Activated B cell treated with CpG ODN at 0.5 μM for 24 hours (primary cell): ENCODE measurements at regions of chr3 and their contacts with region 1.

Region 1: DNA sequence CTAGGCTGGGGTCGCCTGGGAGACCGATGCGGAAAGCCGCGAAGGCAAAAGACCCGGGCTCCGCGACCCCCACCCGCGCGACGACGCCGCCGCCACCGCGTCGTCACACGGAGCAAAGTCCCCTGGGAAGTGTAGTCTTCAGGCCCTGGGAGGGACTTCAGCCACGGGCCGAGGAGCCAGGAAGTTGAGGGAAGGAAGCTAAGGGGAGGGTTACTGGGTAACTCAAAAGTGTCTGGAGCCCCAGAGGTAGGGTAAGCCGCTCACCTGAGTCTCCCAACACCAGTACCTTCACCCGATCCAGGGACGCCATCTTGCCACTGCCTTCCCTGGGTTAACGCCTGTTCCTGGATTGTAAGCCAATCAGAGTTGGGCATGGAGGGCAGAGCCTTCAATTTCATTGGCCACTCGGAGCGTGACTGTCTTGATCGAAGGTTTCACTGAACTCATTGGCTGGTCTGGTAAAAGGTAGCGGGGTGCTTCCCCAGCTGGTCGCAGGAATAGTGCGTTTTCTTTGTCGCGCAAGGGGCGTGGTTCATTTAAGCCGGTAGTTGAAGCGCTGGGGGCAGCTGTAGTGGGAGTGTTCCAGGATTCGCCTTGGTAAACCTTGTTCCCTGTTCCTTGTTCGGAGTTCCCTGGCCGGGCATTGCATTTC is at the starts of genes GTF2E1 and RABL3:
- DNase-seq: peak; percentile 88
- ATAC-seq: peak; percentile 96
- H3K4me3 Mint-ChIP-seq: peak within 1 kb of the TSS; percentile 96
- H3K27ac Mint-ChIP-seq: peak within 1 kb of the TSS; percentile 97
- H3K4me1 Mint-ChIP-seq: peaks cover 36% of the 10 kb centered on the region
- H3K27me3 Mint-ChIP-seq: no peaks in the 10 kb centered on the region
- CTCF ChIP-seq: no peak
- total RNA-seq, gene GTF2E1: 22.1 and 22.9 TPM in 2 replicates
- total RNA-seq, gene RABL3: 29.7 and 29.9 TPM in 2 replicates

Region 2: DNA sequence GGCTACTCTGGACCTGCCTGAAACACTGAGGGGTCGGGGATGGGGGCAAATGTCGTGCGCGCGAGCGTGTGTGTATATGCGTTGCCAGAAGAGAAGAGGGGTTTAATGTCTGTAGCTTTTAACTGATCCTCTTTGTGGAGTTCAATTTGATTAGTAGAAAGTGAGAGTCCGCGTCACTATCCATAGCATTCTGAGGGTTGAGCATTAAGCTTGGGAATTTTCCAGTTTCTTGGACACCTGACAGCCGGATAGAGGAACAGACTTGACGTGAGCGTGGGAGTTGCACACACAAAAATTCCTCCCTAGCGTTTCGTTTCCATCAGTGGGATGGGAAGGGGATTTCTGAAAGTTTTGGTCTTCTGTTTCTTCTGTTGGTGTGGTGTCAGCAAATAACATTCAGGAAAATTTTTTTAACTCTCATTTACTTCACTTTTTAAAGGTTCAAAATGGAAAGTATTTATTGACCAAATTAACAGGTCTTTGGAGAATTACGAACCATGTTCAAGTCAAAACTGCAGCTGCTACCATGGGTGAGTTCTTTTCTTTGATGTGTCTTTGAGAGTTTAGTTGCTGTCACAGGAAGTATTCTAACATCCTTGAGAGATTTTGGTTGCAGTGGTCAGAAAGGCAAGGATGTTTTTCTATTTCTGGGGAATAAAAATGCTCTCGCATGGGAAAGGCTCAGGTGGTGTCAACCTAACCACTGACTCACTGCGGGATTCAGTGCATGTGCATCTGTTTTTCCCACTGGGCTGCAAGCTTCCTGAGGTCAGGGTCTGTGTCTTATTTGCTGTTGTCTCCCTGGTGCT is 1272.7 kb before region 1 on chr3:
- CTCF ChIA-PET with region 1: no interaction called
- POLR2A ChIA-PET with region 1: no interaction called
- intact Hi-C with region 1: loop called (anchors 2 kb)
- DNase-seq: no peak
- ATAC-seq: peak; percentile 45
- H3K4me3 Mint-ChIP-seq: peak overlapping the region; percentile 93
- H3K27ac Mint-ChIP-seq: peak overlapping the region; percentile 90
- H3K4me1 Mint-ChIP-seq: peaks cover 32% of the 10 kb centered on the region
- H3K27me3 Mint-ChIP-seq: no peaks in the 10 kb centered on the region
- CTCF ChIP-seq: no peak

Region 3: GRCh38 chr3:120417272-120417911 is 324.9 kb before region 1 on chr3:
- CTCF ChIA-PET with region 1: no interaction called
- POLR2A ChIA-PET with region 1: no interaction called
- intact Hi-C with region 1: loop called (anchors 5 kb)
- DNase-seq: peak; percentile 61
- ATAC-seq: peak; percentile 100
- H3K4me3 Mint-ChIP-seq: peak overlapping the region; percentile 83
- H3K27ac Mint-ChIP-seq: peak overlapping the region; percentile 37
- H3K4me1 Mint-ChIP-seq: peaks cover 16% of the 10 kb centered on the region
- H3K27me3 Mint-ChIP-seq: no peaks in the 10 kb centered on the region
- CTCF ChIP-seq: no peak

Region 4: GRCh38 chr3:120596116-120596852 is 146.0 kb before region 1 on chr3 and contains the start of gene NDUFB4:
- CTCF ChIA-PET with region 1: no interaction called
- POLR2A ChIA-PET with region 1: interaction called, 21 read pairs
- intact Hi-C with region 1: loop called (anchors 1 kb)
- DNase-seq: peak; percentile 82
- ATAC-seq: peak; percentile 96
- H3K4me3 Mint-ChIP-seq: peak within 1 kb of the TSS; percentile 96
- H3K27ac Mint-ChIP-seq: peak within 1 kb of the TSS; percentile 94
- H3K4me1 Mint-ChIP-seq: peaks cover 11% of the 10 kb centered on the region
- H3K27me3 Mint-ChIP-seq: peaks cover 2% of the 10 kb centered on the region
- CTCF ChIP-seq: no peak
- total RNA-seq, gene NDUFB4: 80.4 and 86.3 TPM in 2 replicates

Region 5: DNA sequence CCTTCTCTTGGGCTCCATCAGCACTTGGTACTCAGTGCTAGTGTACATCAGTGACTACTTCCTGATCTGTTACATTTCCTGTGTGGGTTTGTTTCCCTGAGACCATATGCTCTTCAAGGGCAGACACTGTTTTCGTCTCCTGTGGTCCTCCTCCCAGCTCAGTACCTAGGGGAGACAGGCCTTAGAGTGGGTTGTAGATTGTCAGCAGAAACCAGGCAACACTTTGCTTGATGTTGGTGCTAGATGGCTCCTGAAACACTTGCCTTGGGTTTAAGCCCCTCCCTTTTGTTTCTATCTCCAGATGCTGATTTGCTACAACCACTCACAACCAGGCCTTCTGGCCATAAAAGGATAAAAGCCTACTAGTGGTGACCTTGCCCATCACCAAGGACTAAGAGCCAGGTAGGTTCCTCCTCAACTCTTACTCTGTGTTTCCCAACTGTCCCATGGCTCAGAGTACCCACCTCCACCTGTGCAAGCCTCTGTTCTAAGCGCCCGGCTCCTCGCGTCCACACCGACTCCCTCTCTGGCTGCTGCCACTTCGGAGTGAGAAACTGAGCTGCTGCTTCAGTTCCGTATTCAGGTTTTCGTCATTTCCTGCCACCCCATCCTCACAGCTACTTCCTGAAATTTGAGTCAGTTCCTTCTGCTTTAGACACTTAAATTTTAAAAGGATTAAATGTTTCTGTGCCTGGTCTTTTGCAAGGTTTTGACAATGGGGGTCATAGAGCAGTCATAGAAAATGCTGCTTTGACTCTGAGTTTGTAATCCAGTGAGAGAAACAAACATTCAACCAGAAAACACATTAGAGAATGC is 918.2 kb after region 1 on chr3 and contains the start of gene HCLS1:
- CTCF ChIA-PET with region 1: no interaction called
- POLR2A ChIA-PET with region 1: no interaction called
- intact Hi-C with region 1: loop called (anchors 5 kb)
- DNase-seq: peak; percentile 73
- ATAC-seq: peak; percentile 85
- H3K4me3 Mint-ChIP-seq: peak within 1 kb of the TSS; percentile 90
- H3K27ac Mint-ChIP-seq: peak within 1 kb of the TSS; percentile 96
- H3K4me1 Mint-ChIP-seq: peaks cover 55% of the 10 kb centered on the region
- H3K27me3 Mint-ChIP-seq: no peaks in the 10 kb centered on the region
- CTCF ChIP-seq: no peak
- total RNA-seq, gene HCLS1: 434 and 440 TPM in 2 replicates